A673 (cell line): ENCODE measurements at regions of chr5 and their contacts with region 1.

Region 1: GRCh38 chr5:96336351-96336985 is 96.6 kb downstream of the PCSK1 start:
- DNase-seq: peak; percentile 84
- H3K4me3 ChIP-seq: no peak overlapping the region
- H3K27ac ChIP-seq: no peak overlapping the region
- H3K4me1 ChIP-seq: no peaks in the 10 kb centered on the region
- H3K27me3 ChIP-seq: no peaks in the 10 kb centered on the region
- CTCF ChIP-seq: peak; percentile 93

Region 2: DNA sequence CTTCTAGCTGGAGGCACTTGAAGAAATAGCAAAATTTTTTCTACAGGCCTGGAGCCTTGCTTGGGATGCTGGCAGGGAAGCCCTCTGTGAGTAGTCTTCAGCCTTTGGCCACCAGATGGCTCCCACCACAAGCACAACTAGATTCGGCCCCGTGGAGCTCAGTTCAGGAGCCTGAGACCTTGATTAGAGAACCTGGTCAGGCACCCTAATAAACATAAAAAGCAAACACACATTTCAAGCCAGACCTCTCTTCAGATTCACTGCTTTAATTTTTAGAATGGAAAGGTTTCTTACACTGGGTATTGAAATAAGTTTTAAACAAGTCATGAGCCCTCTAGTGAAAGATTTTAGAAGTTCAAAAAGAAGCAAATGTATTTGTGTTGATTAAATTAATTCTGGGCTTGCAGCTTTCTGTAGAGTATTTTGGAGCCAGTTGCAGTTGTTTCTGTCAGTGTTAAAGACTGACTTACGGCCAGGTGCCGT is 555.3 kb before region 1 on chr5:
- CTCF ChIA-PET with region 1: no interaction called
- POLR2A ChIA-PET with region 1: no interaction called
- intact Hi-C with region 1: loop called (anchors 5 kb)
- DNase-seq: peak; percentile 84
- H3K4me3 ChIP-seq: no peak overlapping the region
- H3K27ac ChIP-seq: no peak overlapping the region
- H3K4me1 ChIP-seq: no peaks in the 10 kb centered on the region
- H3K27me3 ChIP-seq: no peaks in the 10 kb centered on the region
- CTCF ChIP-seq: peak; percentile 97

Region 3: GRCh38 chr5:95858661-95859326 is 477.7 kb before region 1 on chr5:
- CTCF ChIA-PET with region 1: interaction called, 10 read pairs
- POLR2A ChIA-PET with region 1: no interaction called
- intact Hi-C with region 1: loop called (anchors 1 kb)
- DNase-seq: peak; percentile 92
- H3K4me3 ChIP-seq: peak overlapping the region; percentile 27
- H3K27ac ChIP-seq: no peak overlapping the region
- H3K4me1 ChIP-seq: peaks cover 17% of the 10 kb centered on the region
- H3K27me3 ChIP-seq: no peaks in the 10 kb centered on the region
- CTCF ChIP-seq: peak; percentile 99

Region 4: DNA sequence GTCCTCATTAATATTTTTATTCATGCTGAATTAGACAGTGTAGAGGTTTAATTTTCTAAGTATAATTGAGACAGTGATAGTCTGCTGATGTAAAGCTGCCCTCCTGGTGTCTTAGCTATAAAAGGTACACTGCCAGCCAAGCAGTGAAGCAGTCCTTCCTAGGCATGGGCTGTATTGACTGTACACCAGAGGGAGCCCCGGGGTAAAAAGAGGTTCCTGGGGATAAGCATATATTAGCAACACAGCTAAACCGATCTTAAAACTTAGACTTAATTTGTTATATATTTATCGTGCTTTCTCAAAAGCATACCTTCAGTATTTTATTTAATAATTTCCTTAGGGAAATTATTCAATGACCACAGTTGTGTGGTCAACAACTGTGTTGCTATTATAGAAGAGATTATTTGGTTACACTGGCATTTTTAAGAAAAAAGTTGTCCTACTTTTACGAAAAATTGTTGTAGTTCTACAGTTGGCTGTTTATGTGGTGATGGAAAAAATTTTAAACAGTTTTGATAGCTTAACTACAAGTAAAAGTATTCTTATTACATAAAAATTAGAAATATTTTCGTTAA is 443.6 kb before region 1 on chr5:
- CTCF ChIA-PET with region 1: interaction called, 11 read pairs
- POLR2A ChIA-PET with region 1: interaction called, 3 read pairs
- intact Hi-C with region 1: loop called (anchors 2 kb)
- DNase-seq: peak; percentile 72
- H3K4me3 ChIP-seq: no peak overlapping the region
- H3K27ac ChIP-seq: no peak overlapping the region
- H3K4me1 ChIP-seq: no peaks in the 10 kb centered on the region
- H3K27me3 ChIP-seq: no peaks in the 10 kb centered on the region
- CTCF ChIP-seq: peak; percentile 70

Region 5: GRCh38 chr5:95961617-95962474 is 374.6 kb before region 1 on chr5 and contains the start of gene ELL2:
- CTCF ChIA-PET with region 1: no interaction called
- POLR2A ChIA-PET with region 1: no interaction called
- intact Hi-C with region 1: loop called (anchors 1 kb)
- DNase-seq: peak; percentile 97
- H3K4me3 ChIP-seq: peak within 1 kb of the TSS; percentile 81
- H3K27ac ChIP-seq: peak within 1 kb of the TSS; percentile 68
- H3K4me1 ChIP-seq: peaks cover 15% of the 10 kb centered on the region
- H3K27me3 ChIP-seq: no peaks in the 10 kb centered on the region
- CTCF ChIP-seq: no peak
- total RNA-seq, gene ELL2: 7.5 and 12.0 TPM in 2 replicates

Region 6: DNA sequence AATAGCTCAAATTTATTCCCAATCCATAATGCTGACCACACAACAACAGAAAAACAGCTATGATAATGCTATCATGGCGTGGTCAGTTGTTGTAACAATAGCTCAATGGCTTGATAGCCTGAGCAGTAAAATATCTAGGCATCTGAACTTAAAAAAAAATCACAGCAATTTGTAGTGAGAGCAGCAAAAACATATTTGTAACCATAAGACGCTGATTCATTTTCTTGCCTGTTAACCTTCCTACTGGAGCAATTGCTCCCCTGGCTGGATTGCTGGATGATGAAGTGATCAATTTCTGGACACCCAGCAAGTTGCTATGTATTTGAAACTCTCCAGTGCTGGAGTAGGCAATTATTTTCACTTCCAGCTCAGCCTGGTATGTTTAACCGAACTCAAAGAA is 18.5 kb before region 1 on chr5:
- CTCF ChIA-PET with region 1: no interaction called
- POLR2A ChIA-PET with region 1: interaction called, 15 read pairs
- intact Hi-C with region 1: no loop called
- DNase-seq: no peak
- H3K4me3 ChIP-seq: no peak overlapping the region
- H3K27ac ChIP-seq: no peak overlapping the region
- H3K4me1 ChIP-seq: no peaks in the 10 kb centered on the region
- H3K27me3 ChIP-seq: no peaks in the 10 kb centered on the region
- CTCF ChIP-seq: no peak